Activated CD8-positive, alpha-beta T cell treated with anti-CD3 and anti-CD28 coated beads for 36 hours (primary cell): ENCODE measurements at regions of chr11 and their contacts with region 1.

Region 1: GRCh38 chr11:27514076-27514475 is 7.5 kb upstream of the LIN7C start:
- DNase-seq: no peak
- ATAC-seq: no peak
- H3K4me3 Mint-ChIP-seq: no peak overlapping the region
- H3K27ac Mint-ChIP-seq: no peak overlapping the region
- H3K4me1 Mint-ChIP-seq: no peaks in the 10 kb centered on the region
- H3K27me3 Mint-ChIP-seq: no peaks in the 10 kb centered on the region
- CTCF ChIP-seq: no peak

Region 2: GRCh38 chr11:27497284-27497866 is 16.7 kb before region 1 on chr11:
- CTCF ChIA-PET with region 1: interaction called, 25 read pairs
- POLR2A ChIA-PET with region 1: no interaction called
- intact Hi-C with region 1: no loop called
- DNase-seq: no peak
- ATAC-seq: peak; percentile 53
- H3K4me3 Mint-ChIP-seq: no peak overlapping the region
- H3K27ac Mint-ChIP-seq: no peak overlapping the region
- H3K4me1 Mint-ChIP-seq: peaks cover 19% of the 10 kb centered on the region
- H3K27me3 Mint-ChIP-seq: no peaks in the 10 kb centered on the region
- CTCF ChIP-seq: peak; percentile 56